Activated CD8-positive, alpha-beta T cell treated with anti-CD3 and anti-CD28 coated beads for 36 hours (primary cell): ENCODE measurements at regions of chr12 and their contacts with region 1.

Region 1: DNA sequence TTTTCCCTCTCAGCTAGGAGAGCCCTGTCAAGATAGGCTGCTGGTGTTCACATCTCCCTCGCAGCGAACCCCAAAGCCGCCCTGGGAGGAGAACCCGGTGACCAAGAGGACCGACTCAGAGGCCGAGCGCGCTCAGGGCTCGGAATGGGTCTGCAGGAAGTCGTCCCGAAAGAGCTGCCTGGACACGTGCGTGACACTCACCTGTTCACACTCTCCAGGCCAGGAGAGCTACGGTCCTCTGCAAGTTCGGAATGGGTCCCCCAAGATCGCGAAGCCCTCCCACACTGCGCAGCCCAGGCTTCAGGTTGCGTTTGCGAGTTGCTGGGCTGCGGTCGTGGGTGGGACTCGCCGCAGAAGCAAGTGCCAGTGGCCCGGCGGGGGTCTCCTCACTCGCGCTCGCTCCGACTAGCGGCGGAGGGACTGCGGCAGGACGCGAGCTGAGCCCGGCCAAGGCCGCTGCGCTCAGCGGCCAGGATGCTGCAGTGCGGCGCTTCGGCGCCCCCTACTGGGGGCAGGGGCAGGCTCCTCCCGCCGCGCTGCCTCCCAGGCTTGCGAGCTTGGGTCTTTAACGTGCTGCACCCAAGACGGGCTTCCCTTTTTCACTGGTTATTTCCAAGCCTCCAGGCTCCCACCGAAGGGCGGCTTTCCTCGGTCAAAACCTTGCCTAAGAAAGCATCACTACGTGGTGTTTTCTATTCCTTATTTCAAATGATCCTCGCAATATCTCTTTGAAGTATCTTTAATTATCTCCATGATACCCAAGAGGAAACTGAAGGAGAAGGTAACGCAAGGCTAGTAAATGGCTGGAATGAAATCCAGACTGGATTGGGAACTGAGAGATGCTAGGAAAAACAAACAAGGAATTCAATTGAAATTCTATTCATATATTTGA is at the start of gene RERG:
- DNase-seq: peak; percentile 71
- ATAC-seq: peak; percentile 99
- H3K4me3 Mint-ChIP-seq: peak within 1 kb of the TSS; percentile 47
- H3K27ac Mint-ChIP-seq: no peak within 1 kb of the TSS
- H3K4me1 Mint-ChIP-seq: no peaks in the 10 kb centered on the region
- H3K27me3 Mint-ChIP-seq: peaks cover 29% of the 10 kb centered on the region
- CTCF ChIP-seq: peak; percentile 90
- total RNA-seq, gene RERG: not detected

Region 2: DNA sequence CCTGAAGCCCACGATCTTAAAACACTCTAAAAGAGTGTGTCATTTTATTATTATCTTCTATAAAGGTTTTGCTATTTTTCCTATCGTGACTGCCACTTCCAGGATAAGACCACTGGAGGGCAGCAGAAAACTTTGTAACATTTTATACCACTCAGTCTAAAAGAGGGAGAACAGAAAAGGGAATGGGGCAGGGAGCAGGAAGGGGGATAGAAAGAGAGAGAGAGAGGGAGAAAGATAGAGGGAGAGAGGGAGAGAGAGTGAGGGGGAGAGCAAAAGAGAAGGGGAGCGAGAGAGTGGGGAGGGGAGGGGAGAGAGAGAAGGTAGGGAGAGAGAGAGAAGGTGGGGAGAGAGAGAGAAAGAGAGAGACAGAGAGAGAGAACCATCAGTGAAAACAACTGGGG is 375.9 kb before region 1 on chr12:
- CTCF ChIA-PET with region 1: interaction called, 29 read pairs
- POLR2A ChIA-PET with region 1: no interaction called
- intact Hi-C with region 1: loop called (anchors 5 kb)
- DNase-seq: peak; percentile 65
- ATAC-seq: peak; percentile 76
- H3K4me3 Mint-ChIP-seq: no peak overlapping the region
- H3K27ac Mint-ChIP-seq: peak overlapping the region; percentile 43
- H3K4me1 Mint-ChIP-seq: peaks cover 12% of the 10 kb centered on the region
- H3K27me3 Mint-ChIP-seq: no peaks in the 10 kb centered on the region
- CTCF ChIP-seq: peak; percentile 68

Region 3: DNA sequence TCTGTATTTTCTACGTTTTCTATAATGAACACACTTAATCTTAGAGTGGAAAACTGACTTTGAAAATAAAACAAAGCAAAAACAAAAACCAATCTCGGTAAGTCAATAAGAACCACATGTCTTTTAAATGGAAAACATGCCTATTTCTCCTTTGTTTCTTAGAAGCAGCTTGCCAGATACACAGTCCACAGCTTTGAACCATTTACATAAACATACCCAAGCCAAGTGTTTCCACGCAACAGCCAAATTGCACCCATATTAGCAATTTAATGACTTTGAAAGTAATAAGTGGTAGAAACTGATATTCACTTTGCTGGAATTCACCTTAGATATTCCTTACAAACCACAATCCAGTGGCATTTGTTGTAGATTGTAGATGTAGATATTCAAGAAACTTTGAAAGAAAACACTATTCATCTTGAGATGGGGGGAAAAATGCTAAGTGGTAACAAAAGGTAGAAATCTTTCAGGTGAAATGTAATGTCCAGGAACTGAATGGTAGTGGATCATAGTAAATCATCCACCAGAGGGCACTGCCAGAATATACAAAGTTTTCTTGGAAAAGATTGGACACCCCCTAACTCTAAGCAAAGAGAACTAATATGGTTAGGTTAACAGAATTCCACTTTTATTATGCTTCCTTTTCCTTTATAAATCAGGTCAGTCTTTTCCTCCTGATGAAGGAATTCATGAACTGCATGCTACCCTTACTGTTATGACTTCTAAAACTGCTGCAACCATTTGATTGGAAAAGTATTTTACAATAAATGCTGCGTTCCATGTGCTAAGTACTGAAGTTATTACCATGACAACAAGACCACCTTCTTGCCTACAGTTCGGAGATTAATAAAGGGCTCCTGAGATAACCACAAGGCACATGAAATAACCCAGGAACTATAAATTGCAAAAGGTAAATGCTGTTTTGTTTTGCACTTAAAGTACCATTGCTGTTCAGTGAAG is 69.8 kb before region 1 on chr12:
- CTCF ChIA-PET with region 1: interaction called, 33 read pairs
- POLR2A ChIA-PET with region 1: no interaction called
- intact Hi-C with region 1: loop called (anchors 2 kb)
- DNase-seq: no peak
- ATAC-seq: no peak
- H3K4me3 Mint-ChIP-seq: no peak overlapping the region
- H3K27ac Mint-ChIP-seq: no peak overlapping the region
- H3K4me1 Mint-ChIP-seq: no peaks in the 10 kb centered on the region
- H3K27me3 Mint-ChIP-seq: peaks cover 7% of the 10 kb centered on the region
- CTCF ChIP-seq: peak; percentile 55

Region 4: DNA sequence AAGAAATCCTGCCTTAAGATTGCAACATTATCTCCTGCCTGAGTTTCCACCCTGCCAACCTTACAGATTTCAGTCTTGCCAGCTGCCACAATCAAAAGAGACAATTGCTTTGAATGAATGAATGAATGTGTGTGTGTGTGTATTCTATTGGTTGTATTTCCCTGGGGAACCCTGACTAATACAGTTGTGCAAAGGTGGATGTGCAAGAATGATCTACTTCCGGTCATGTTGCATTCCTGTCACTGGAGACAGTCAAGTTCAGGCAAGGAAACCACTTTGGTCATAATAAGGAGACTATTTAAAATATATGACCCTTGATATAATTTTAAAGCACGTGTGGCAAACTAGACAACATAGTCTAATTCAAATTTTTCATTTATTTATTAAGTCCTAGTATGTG is 13.1 kb before region 1 on chr12:
- CTCF ChIA-PET with region 1: interaction called, 23 read pairs
- POLR2A ChIA-PET with region 1: no interaction called
- intact Hi-C with region 1: no loop called
- DNase-seq: no peak
- ATAC-seq: no peak
- H3K4me3 Mint-ChIP-seq: no peak overlapping the region
- H3K27ac Mint-ChIP-seq: no peak overlapping the region
- H3K4me1 Mint-ChIP-seq: no peaks in the 10 kb centered on the region
- H3K27me3 Mint-ChIP-seq: peaks cover 8% of the 10 kb centered on the region
- CTCF ChIP-seq: no peak